ENCODE measurements at regions of chr3 and their contacts with region 1.

Region 1: DNA sequence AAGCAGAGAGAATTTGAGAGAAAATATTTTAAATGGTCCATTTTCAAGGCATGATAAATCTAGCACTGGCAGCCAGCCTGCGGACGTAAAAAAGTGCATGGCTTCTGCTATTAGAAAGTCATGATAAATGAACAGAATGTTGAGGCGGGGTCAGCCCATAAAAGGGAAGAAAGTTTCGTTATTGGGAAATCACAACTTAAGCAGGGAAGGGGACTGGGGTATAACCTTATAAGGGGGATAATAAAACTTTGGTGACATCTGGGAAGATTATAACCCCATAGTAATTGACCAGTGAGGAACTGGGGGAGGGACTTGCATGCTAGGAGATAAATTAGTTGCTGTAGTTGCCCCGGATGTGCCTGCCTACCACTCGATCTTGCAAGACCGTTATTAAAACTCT is 88.4 kb upstream of the PLSCR4 start:
- DNase-seq: no peak
- H3K4me3 ChIP-seq: no peak overlapping the region
- H3K27ac ChIP-seq: no peak overlapping the region
- H3K4me1 ChIP-seq: peaks cover 0 to 15% (median 3%) of the 10 kb centered on the region in 4 donors
- H3K27me3 ChIP-seq: no peaks in the 10 kb centered on the region
- CTCF ChIP-seq: no peak
- EP300 ChIP-seq: no peak
- POLR2A ChIP-seq: no peak

Region 2: GRCh38 chr3:146577662-146578061 is 238.3 kb after region 1 on chr3:
- intact Hi-C with region 1: loop called (anchors 5 kb)
- DNase-seq: no peak
- H3K4me3 ChIP-seq: no peak overlapping the region
- H3K27ac ChIP-seq: no peak overlapping the region
- H3K4me1 ChIP-seq: no peaks in the 10 kb centered on the region
- H3K27me3 ChIP-seq: no peaks in the 10 kb centered on the region
- CTCF ChIP-seq: peak in 1 of 4 experiments; percentile 26
- EP300 ChIP-seq: no peak
- POLR2A ChIP-seq: no peak

Measured in sigmoid colon (tissue), 7 donors.